Natural killer cell (primary cell): ENCODE measurements at regions of chr4 and their contacts with region 1.

Region 1: DNA sequence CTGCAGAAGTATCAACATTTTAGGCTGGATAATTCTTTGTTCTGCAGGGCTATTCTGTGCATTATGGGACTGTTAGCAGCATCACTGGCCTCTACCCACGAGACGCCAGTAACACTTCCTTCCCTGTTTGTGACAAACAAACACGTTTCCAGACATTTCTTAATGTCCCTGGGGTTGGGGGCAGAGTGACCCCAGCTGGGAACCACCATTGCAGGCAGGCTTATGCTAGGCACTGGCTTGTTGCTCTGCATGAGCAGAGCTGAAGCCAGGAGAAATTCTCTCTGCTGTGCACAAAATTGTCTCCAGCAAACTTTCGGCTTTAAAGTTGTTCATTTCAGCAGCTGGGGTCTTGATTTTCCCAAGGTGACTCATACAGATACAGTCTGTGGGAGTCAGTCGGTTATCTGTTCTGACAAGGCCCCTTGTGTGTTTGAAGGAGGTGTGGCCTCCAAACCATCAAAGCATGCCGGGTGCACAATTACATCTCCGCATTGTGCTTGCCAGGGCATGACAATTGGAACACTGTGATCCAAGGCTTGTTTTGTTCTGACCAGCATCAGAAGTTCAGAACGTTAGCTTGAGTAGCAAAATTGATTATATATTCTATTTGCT is 156.4 kb upstream of the BOD1L1 start:
- DNase-seq: no peak
- ATAC-seq: no peak
- H3K4me3 ChIP-seq: no peak overlapping the region
- H3K4me3 Mint-ChIP-seq: no peak overlapping the region
- H3K27ac ChIP-seq: no peak overlapping the region
- H3K27ac Mint-ChIP-seq: no peak overlapping the region
- H3K4me1 ChIP-seq: no peaks in the 10 kb centered on the region
- H3K4me1 Mint-ChIP-seq: no peaks in the 10 kb centered on the region
- H3K27me3 ChIP-seq: no peaks in the 10 kb centered on the region
- H3K27me3 Mint-ChIP-seq: no peaks in the 10 kb centered on the region
- CTCF ChIP-seq: no peak

Region 2: DNA sequence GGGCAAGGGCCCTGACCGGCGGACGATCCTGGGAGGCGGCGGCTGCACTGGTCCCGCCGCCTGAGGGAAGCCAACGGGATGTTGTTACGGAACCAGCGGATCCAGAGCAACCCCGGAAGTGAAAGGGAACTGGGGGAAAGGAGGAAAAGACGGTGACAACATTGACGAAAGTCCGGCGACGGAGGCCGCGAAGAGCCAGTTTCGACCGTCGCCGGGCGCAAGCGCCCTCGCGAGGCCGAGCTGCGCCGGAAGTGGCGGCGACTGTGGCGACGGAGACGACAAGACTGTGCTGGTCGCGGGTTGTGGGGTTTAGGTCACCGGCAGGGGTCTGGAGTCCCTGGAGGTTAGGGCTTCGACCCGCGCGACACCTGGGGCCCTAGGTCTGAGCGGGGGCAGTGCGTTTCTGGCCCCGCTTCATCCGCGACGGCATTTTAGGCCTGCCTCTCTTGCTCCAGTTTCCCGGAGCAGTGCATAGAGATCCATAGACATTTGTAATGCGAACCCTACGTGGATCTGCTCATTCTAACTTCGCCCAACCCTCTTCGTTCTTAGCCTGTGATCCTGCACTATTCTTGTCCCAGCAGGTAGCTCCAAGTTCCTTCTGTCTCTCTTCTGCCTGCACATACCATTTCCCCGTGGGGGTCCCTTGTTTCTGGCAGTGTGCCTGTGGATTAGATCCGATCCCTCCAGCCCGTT is 156.2 kb before region 1 on chr4 and contains the start of gene BOD1L1:
- intact Hi-C with region 1: no loop called
- DNase-seq: peak; percentile 73 to 91
- ATAC-seq: peak; percentile 78 to 86 (median 84)
- H3K4me3 ChIP-seq: peak within 1 kb of the TSS; percentile 74
- H3K4me3 Mint-ChIP-seq: peak within 1 kb of the TSS; percentile 98
- H3K27ac ChIP-seq: peak within 1 kb of the TSS; percentile 78
- H3K27ac Mint-ChIP-seq: peak within 1 kb of the TSS; percentile 97
- H3K4me1 ChIP-seq: peaks cover 18% of the 10 kb centered on the region
- H3K4me1 Mint-ChIP-seq: peaks cover 45 to 48% of the 10 kb centered on the region in 2 donors
- H3K27me3 ChIP-seq: no peaks in the 10 kb centered on the region
- H3K27me3 Mint-ChIP-seq: peaks cover 0 to 2% of the 10 kb centered on the region in 2 donors
- CTCF ChIP-seq: peak; percentile 19
- total RNA-seq, gene BOD1L1: 62.2 to 69.1 (median 67.7) TPM

Region 3: DNA sequence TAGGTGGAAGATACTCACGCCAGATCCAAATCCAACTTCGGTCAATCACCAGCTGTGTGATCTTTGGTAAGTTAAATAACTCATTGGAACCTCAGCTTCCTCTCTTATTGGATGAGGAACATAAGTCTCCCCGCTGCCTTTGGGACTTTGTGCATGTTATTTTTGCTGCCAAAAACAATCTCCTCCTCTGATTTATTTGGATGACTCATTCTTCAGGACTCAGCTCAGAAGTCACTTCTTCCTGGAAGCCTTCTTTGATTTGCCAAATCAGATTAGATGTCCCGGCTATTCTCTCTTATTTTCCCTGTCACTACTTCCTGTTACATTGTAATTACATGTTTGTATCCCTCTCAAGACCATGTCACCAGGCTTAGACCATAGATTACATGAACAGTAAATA is 18.4 kb before region 1 on chr4:
- intact Hi-C with region 1: loop called (anchors 1 kb)
- DNase-seq: no peak
- ATAC-seq: no peak
- H3K4me3 ChIP-seq: no peak overlapping the region
- H3K4me3 Mint-ChIP-seq: no peak overlapping the region
- H3K27ac ChIP-seq: no peak overlapping the region
- H3K27ac Mint-ChIP-seq: no peak overlapping the region
- H3K4me1 ChIP-seq: peaks cover 9% of the 10 kb centered on the region
- H3K4me1 Mint-ChIP-seq: peaks cover 0 to 18% of the 10 kb centered on the region in 2 donors
- H3K27me3 ChIP-seq: no peaks in the 10 kb centered on the region
- H3K27me3 Mint-ChIP-seq: no peaks in the 10 kb centered on the region
- CTCF ChIP-seq: no peak

Region 4: GRCh38 chr4:13794819-13795565 is 11.1 kb after region 1 on chr4:
- intact Hi-C with region 1: no loop called
- DNase-seq: no peak
- ATAC-seq: no peak
- H3K4me3 ChIP-seq: no peak overlapping the region
- H3K4me3 Mint-ChIP-seq: no peak overlapping the region
- H3K27ac ChIP-seq: no peak overlapping the region
- H3K27ac Mint-ChIP-seq: no peak overlapping the region
- H3K4me1 ChIP-seq: no peaks in the 10 kb centered on the region
- H3K4me1 Mint-ChIP-seq: no peaks in the 10 kb centered on the region
- H3K27me3 ChIP-seq: no peaks in the 10 kb centered on the region
- H3K27me3 Mint-ChIP-seq: no peaks in the 10 kb centered on the region
- CTCF ChIP-seq: no peak

Region 5: DNA sequence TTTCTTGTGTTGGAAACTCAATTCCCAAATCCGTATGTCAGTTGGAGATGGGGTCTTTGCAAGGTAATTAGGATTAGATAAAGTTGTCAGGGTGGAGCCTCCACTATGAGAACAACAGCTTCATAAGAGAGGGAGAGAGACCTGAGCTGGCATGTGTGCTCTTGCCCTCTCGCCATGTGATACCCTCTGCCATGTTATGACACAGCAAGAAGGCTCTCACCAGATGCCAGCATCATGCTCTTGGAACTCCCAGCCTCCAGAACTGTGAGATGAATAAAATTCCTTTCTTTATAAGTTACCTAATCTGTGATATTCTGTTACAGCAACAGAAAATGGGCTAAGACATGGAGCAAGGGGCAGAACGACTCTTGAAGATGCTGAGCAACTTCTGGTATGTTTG is 45.6 kb after region 1 on chr4:
- intact Hi-C with region 1: no loop called
- DNase-seq: no peak
- ATAC-seq: no peak
- H3K4me3 ChIP-seq: no peak overlapping the region
- H3K4me3 Mint-ChIP-seq: no peak overlapping the region
- H3K27ac ChIP-seq: no peak overlapping the region
- H3K27ac Mint-ChIP-seq: no peak overlapping the region
- H3K4me1 ChIP-seq: no peaks in the 10 kb centered on the region
- H3K4me1 Mint-ChIP-seq: no peaks in the 10 kb centered on the region
- H3K27me3 ChIP-seq: no peaks in the 10 kb centered on the region
- H3K27me3 Mint-ChIP-seq: peaks cover 0 to 3% of the 10 kb centered on the region in 2 donors
- CTCF ChIP-seq: no peak

Region 6: GRCh38 chr4:13840502-13841190 is 56.7 kb after region 1 on chr4:
- intact Hi-C with region 1: no loop called
- DNase-seq: no peak
- ATAC-seq: no peak
- H3K4me3 ChIP-seq: no peak overlapping the region
- H3K4me3 Mint-ChIP-seq: no peak overlapping the region
- H3K27ac ChIP-seq: no peak overlapping the region
- H3K27ac Mint-ChIP-seq: no peak overlapping the region
- H3K4me1 ChIP-seq: no peaks in the 10 kb centered on the region
- H3K4me1 Mint-ChIP-seq: no peaks in the 10 kb centered on the region
- H3K27me3 ChIP-seq: no peaks in the 10 kb centered on the region
- H3K27me3 Mint-ChIP-seq: no peaks in the 10 kb centered on the region
- CTCF ChIP-seq: no peak